Activated B cell treated with CpG ODN at 0.5 μM for 24 hours (primary cell): ENCODE measurements at regions of chr13 and their contacts with region 1.

Region 1: GRCh38 chr13:42412812-42413483 is 141.0 kb downstream of the AKAP11 start:
- DNase-seq: no peak
- ATAC-seq: no peak
- H3K4me3 Mint-ChIP-seq: no peak overlapping the region
- H3K27ac Mint-ChIP-seq: no peak overlapping the region
- H3K4me1 Mint-ChIP-seq: peaks cover 8% of the 10 kb centered on the region
- H3K27me3 Mint-ChIP-seq: no peaks in the 10 kb centered on the region
- CTCF ChIP-seq: no peak

Region 2: DNA sequence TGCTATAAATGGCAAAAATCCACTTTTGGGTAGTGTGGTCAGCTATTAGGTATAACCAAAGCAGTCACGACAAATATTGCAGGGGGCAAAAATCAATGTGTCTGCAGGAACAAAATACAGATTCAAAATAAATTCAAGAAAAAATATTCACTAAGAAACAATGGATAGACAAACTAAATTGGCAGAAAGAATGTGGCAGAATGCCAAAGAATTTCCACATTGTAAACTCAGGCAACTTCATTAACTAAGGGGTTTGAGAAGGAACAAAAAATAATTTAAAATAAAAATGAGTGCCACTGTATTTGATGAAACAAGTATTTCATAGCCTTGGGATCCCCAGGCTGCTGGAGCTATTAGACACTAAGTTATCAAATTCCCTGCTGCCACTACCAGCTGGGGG is 645.1 kb before region 1 on chr13:
- CTCF ChIA-PET with region 1: no interaction called
- POLR2A ChIA-PET with region 1: no interaction called
- intact Hi-C with region 1: no loop called
- DNase-seq: no peak
- ATAC-seq: no peak
- H3K4me3 Mint-ChIP-seq: no peak overlapping the region
- H3K27ac Mint-ChIP-seq: no peak overlapping the region
- H3K4me1 Mint-ChIP-seq: no peaks in the 10 kb centered on the region
- H3K27me3 Mint-ChIP-seq: no peaks in the 10 kb centered on the region
- CTCF ChIP-seq: no peak

Region 3: DNA sequence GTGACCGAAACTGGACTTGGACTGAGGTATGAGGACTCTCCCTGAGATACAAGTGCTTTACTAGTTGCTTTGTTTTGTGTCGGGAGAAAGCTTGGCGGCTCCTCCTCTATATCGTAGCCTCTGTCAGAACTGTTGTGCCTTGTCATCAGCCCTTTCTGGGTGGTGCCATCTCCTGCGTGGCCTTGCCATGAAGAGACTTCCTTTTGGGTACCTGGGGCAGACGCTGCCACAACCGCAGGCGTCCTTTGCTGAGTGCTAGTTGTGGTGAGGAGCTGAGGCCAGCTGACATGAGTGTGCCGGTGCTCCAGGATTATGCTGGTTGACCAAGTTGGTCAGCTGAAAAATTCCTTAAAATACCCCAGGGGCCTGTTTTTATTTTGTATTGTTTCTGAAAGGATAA is 16.4 kb before region 1 on chr13:
- CTCF ChIA-PET with region 1: no interaction called
- POLR2A ChIA-PET with region 1: no interaction called
- intact Hi-C with region 1: loop called (anchors 2 kb)
- DNase-seq: no peak
- ATAC-seq: peak; percentile 83
- H3K4me3 Mint-ChIP-seq: peak overlapping the region; percentile 39
- H3K27ac Mint-ChIP-seq: peak overlapping the region; percentile 64
- H3K4me1 Mint-ChIP-seq: peaks cover 26% of the 10 kb centered on the region
- H3K27me3 Mint-ChIP-seq: no peaks in the 10 kb centered on the region
- CTCF ChIP-seq: no peak